A549 (cell line): ENCODE measurements at regions of chr9 and their contacts with region 1.

Region 1: GRCh38 chr9:18776836-18777820 is 255.9 kb downstream of the SAXO1 start:
- DNase-seq: no peak
- ATAC-seq: no peak
- H3K4me3 ChIP-seq: no peak overlapping the region
- H3K27ac ChIP-seq: no peak overlapping the region
- H3K4me1 ChIP-seq: no peaks in the 10 kb centered on the region
- CTCF ChIP-seq: no peak
- EP300 ChIP-seq: no peak
- POLR2A ChIP-seq: no peak
- RAD21 ChIP-seq: no peak

Region 2: GRCh38 chr9:18678821-18679590 is 98.1 kb before region 1 on chr9:
- CTCF ChIA-PET with region 1: no interaction called
- POLR2A ChIA-PET with region 1: no interaction called
- DNase-seq: no peak
- ATAC-seq: no peak
- H3K4me3 ChIP-seq: no peak overlapping the region
- H3K27ac ChIP-seq: no peak overlapping the region
- H3K4me1 ChIP-seq: no peaks in the 10 kb centered on the region
- CTCF ChIP-seq: no peak
- EP300 ChIP-seq: no peak
- POLR2A ChIP-seq: no peak
- RAD21 ChIP-seq: no peak

Region 3: DNA sequence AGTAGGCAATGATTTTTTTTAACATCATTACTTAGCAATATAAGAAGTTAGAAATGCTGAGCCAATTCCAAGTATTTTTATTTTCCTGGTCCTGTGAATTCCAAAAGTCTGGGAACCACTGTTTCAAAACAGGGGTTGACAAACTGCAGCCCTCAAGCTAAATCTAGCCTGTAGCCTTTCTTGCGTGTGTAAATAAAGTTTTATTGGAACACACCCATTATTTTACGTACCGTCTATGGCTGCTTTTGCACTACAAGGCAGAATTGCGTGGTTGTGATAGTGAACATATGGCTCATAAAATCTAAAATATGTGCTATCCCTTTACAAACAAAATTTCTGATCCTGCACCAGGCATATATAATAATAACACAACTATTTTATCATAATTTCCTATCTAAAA is 23.2 kb before region 1 on chr9:
- CTCF ChIA-PET with region 1: no interaction called
- POLR2A ChIA-PET with region 1: no interaction called
- DNase-seq: no peak
- ATAC-seq: no peak
- H3K4me3 ChIP-seq: no peak overlapping the region
- H3K27ac ChIP-seq: no peak overlapping the region
- H3K4me1 ChIP-seq: no peaks in the 10 kb centered on the region
- CTCF ChIP-seq: no peak
- EP300 ChIP-seq: no peak
- POLR2A ChIP-seq: no peak
- RAD21 ChIP-seq: no peak

Region 4: GRCh38 chr9:18791074-18791473 is 13.9 kb after region 1 on chr9:
- CTCF ChIA-PET with region 1: interaction called, 10 read pairs
- POLR2A ChIA-PET with region 1: no interaction called
- DNase-seq: peak in 1 of 2 experiments; percentile 43
- ATAC-seq: peak; percentile 43 to 88; a peak in 4 of 6 replicates
- H3K4me3 ChIP-seq: no peak overlapping the region
- H3K27ac ChIP-seq: no peak overlapping the region
- H3K4me1 ChIP-seq: no peaks in the 10 kb centered on the region
- CTCF ChIP-seq: peak; percentile 41
- EP300 ChIP-seq: no peak
- POLR2A ChIP-seq: no peak
- RAD21 ChIP-seq: peak; percentile 30 to 51; a peak in 2 of 5 replicates

Region 5: DNA sequence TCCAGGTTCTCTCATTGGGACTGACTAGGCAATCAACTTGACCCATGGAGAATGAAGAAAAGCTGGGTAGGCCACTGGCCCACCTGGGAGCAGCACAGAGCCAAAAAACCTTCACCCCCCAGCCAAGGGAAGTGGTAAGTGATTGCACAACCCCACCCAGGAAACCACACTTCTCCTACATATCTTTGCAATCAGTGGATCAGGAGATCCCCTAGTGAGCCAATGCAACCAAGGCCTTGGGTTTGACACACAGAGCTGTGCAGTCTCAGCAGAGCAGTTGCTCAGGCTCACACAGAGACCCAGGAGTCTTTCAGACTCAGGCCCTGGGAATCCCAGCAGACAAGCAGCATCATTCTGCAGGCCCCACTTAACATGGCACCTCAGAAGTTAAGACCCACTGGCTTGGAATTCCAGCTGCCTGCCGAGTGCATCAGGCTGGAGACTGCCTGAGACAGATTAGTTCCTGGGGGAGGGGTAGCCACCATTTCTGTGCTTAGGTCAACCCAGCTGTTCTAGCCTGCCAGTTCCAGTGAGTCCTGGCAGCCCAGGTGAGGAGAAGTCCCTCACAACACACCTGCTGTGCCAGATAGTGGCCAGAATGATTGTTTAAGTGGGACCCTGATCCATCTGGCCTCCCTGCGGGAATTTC is 119.5 kb after region 1 on chr9:
- CTCF ChIA-PET with region 1: no interaction called
- POLR2A ChIA-PET with region 1: no interaction called
- DNase-seq: no peak
- ATAC-seq: no peak
- H3K4me3 ChIP-seq: no peak overlapping the region
- H3K27ac ChIP-seq: no peak overlapping the region
- H3K4me1 ChIP-seq: no peaks in the 10 kb centered on the region
- CTCF ChIP-seq: no peak
- EP300 ChIP-seq: no peak
- POLR2A ChIP-seq: no peak
- RAD21 ChIP-seq: no peak